SK-N-SH (cell line): ENCODE measurements at regions of chr2 and their contacts with region 1.

Region 1: GRCh38 chr2:31138037-31138962 is at the start of gene GALNT14:
- DNase-seq: peak; percentile 98
- H3K4me3 ChIP-seq: peak within 1 kb of the TSS; percentile 55 to 64
- H3K27ac ChIP-seq: peak within 1 kb of the TSS in 1 of 2 experiments; percentile 68; a peak in 2 of 4 replicates
- H3K4me1 ChIP-seq: peaks cover 0 to 22% of the 10 kb centered on the region in 2 experiments; a peak in 1 of 4 replicates
- H3K27me3 ChIP-seq: peaks cover 57% of the 10 kb centered on the region
- CTCF ChIP-seq: peak; percentile 52
- EP300 ChIP-seq: peak in 1 of 2 experiments; percentile 16; a peak in 1 of 4 replicates
- RAD21 ChIP-seq: peak; percentile 67
- polyA plus RNA-seq, gene GALNT14: 1.6 and 1.8 TPM in 2 replicates

Region 2: DNA sequence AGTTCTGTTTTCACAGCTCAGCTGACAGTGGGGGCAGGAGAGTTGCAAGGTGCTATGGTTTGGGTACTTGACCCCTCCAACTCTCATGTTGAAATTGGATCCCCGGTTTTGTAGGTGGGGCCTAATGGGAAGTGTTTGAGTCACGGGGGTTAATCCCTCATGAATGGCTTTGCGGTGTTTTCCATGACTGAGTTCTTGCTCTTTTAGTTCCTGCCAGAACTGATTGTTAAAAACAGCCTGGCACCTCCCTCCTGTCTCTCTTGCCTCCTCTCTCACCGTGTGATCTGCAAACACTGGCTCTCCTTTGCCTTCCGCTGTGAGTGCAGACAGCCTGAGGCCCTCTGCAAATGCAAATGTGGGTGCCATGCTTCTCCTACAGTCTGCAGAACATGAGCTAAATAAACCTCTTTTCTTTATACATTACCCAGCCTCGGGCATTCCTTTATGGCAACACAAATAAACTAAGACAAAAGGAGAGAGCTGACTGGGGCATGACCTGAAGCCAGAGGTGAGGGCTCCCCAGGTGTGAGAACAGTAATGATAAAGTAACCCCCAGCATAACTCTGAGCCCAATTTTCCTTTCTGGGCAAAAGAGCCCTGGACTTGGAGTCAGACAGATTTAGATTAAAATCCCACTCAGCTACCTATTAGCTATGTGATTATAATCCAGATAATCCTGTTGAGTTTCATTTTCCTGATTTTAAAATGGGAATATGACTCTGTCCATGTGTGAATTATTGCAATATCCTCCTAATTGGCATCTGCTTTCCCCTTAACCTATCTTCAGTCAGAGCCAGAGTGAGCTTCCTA is 266.1 kb before region 1 on chr2:
- CTCF ChIA-PET with region 1: interaction called, 106 read pairs
- POLR2A ChIA-PET with region 1: interaction called, 9 read pairs
- DNase-seq: no peak
- H3K4me3 ChIP-seq: no peak overlapping the region
- H3K27ac ChIP-seq: peak overlapping the region in 1 of 2 experiments; percentile 99; a peak in 2 of 4 replicates
- H3K4me1 ChIP-seq: peaks cover 0 to 32% of the 10 kb centered on the region in 2 experiments; a peak in 2 of 4 replicates
- H3K27me3 ChIP-seq: no peaks in the 10 kb centered on the region
- CTCF ChIP-seq: no peak
- EP300 ChIP-seq: peak in 1 of 2 experiments; percentile 46; a peak in 1 of 4 replicates
- RAD21 ChIP-seq: no peak; the same call in 1 of the 2 replicates

Region 3: GRCh38 chr2:30979822-30980245 is 158.5 kb before region 1 on chr2:
- CTCF ChIA-PET with region 1: interaction called, 17 read pairs
- POLR2A ChIA-PET with region 1: no interaction called
- DNase-seq: peak; percentile 55
- H3K4me3 ChIP-seq: no peak overlapping the region
- H3K27ac ChIP-seq: peak overlapping the region in 1 of 2 experiments; percentile 80; a peak in 2 of 4 replicates
- H3K4me1 ChIP-seq: peaks cover 0 to 57% of the 10 kb centered on the region in 2 experiments; a peak in 2 of 4 replicates
- H3K27me3 ChIP-seq: no peaks in the 10 kb centered on the region
- CTCF ChIP-seq: peak; percentile 11; the same call in 1 of the 2 replicates
- EP300 ChIP-seq: no peak
- RAD21 ChIP-seq: peak; percentile 48

Region 4: GRCh38 chr2:30997979-30998378 is 140.3 kb before region 1 on chr2:
- CTCF ChIA-PET with region 1: interaction called, 16 read pairs
- POLR2A ChIA-PET with region 1: interaction called, 7 read pairs
- DNase-seq: no peak
- H3K4me3 ChIP-seq: no peak overlapping the region
- H3K27ac ChIP-seq: peak overlapping the region in 1 of 2 experiments; percentile 48; a peak in 1 of 4 replicates
- H3K4me1 ChIP-seq: peaks cover 0 to 43% of the 10 kb centered on the region in 2 experiments; a peak in 2 of 4 replicates
- H3K27me3 ChIP-seq: no peaks in the 10 kb centered on the region
- CTCF ChIP-seq: no peak
- EP300 ChIP-seq: no peak
- RAD21 ChIP-seq: no peak

Region 5: GRCh38 chr2:31110431-31110830 is 27.9 kb before region 1 on chr2:
- CTCF ChIA-PET with region 1: interaction called, 13 read pairs
- POLR2A ChIA-PET with region 1: no interaction called
- DNase-seq: no peak
- H3K4me3 ChIP-seq: no peak overlapping the region
- H3K27ac ChIP-seq: no peak overlapping the region
- H3K4me1 ChIP-seq: peaks cover 0 to 32% of the 10 kb centered on the region in 2 experiments; a peak in 2 of 4 replicates
- H3K27me3 ChIP-seq: no peaks in the 10 kb centered on the region
- CTCF ChIP-seq: no peak
- EP300 ChIP-seq: no peak
- RAD21 ChIP-seq: no peak

Region 6: GRCh38 chr2:31151501-31151900 is 13.2 kb after region 1 on chr2:
- CTCF ChIA-PET with region 1: interaction called, 35 read pairs
- POLR2A ChIA-PET with region 1: no interaction called
- DNase-seq: peak; percentile 40
- H3K4me3 ChIP-seq: no peak overlapping the region
- H3K27ac ChIP-seq: no peak overlapping the region
- H3K4me1 ChIP-seq: no peaks in the 10 kb centered on the region
- H3K27me3 ChIP-seq: 0 out of 2 replicates have a peak, but pooled peaks cover 5% of the 10 kb centered on the region
- CTCF ChIP-seq: 0 out of 2 replicates have a peak, but pooled peaks have one; percentile 19
- EP300 ChIP-seq: no peak
- RAD21 ChIP-seq: peak; percentile 39